Mammary epithelial cell (primary cell): ENCODE measurements at regions of chr21 and their contacts with region 1.

Region 1: DNA sequence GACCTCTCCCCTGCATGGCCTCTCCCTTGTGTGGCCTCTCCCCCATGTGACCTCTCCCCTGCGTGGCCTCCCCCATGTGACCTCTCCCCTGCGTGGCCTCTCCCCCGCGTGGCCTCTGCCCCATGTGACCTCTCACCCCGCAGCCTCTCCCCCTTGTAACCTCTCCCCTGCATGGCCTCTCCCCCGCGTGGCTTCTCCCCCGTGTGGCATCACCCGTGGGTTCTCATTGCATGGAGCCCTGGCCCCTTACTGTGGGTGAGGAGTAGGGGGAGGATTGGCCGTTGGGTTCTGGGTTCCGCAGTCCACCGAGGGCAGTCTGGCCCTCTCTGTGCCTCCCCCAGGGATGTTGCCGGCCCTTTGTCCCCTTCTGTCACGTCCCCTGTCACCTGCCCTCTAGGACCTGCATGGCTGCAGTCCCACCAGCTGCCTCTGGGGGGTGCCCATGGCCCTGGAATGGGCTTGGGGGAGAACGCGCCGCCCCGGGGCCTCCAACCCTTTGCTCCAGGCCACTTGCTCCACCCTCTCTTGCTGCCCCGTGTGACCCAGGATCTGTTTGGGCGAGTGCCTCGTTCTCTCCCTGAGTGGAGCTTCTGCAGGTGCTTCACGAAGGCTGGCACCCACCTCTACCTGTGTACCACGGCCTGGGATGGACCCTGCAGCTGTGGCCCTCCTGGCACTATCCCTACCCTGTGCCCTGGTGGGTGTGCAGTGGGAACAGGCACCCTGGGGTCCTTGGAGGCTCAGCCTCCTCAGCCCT is 21.3 kb downstream of the RRP1 start:
- DNase-seq: peak; percentile 53
- H3K4me3 ChIP-seq: peak overlapping the region in 2 of 3 experiments; percentile 31 to 49
- H3K27ac ChIP-seq: no peak overlapping the region
- H3K4me1 ChIP-seq: peaks cover 50% of the 10 kb centered on the region
- H3K27me3 ChIP-seq: no peaks in the 10 kb centered on the region
- CTCF ChIP-seq: peak; percentile 87 to 97

Region 2: DNA sequence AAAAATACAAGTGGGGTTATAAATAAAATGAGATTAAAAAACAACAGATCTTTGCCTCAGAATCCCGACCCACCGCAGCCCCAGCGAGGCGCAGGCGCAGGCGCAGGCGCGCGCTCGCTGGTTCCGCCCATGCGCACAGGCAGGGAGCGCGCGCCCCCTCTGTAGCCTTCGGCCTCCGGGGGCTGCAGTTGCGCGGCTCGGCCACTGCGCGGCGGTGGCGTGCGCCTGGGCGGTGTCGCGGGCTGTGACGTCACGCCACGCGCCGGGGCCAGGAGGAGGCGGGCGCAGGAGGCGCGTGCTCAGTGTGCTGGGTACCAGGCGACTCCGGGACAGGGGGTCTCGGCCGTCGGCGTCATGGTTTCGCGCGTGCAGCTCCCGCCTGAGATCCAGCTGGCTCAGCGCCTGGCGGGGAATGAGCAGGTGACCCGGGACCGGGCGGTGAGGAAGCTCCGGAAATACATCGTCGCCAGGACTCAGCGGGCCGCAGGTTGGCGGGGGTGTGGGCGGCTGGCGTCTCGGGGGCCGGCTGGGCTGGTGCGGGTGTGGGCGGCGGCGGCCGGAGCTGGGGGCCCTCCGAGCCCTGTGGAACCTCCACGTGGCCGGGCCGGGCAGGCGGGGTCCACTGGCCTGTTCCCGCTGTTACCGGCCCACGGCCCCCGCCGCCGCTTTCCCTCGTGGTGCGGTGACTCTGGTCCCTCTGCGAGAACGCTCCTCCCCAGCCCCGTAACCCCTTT is 21.2 kb before region 1 on chr21 and contains the start of gene RRP1:
- CTCF ChIA-PET with region 1: no interaction called
- dilution Hi-C with region 1: no loop called
- in situ Hi-C with region 1: no loop called
- intact Hi-C with region 1: loop called (anchors 1 kb)
- DNase-seq: peak; percentile 87
- H3K4me3 ChIP-seq: peak within 1 kb of the TSS; percentile 84 to 100 (median 87)
- H3K27ac ChIP-seq: peak within 1 kb of the TSS; percentile 68
- H3K4me1 ChIP-seq: peaks cover 8% of the 10 kb centered on the region
- H3K27me3 ChIP-seq: no peaks in the 10 kb centered on the region
- CTCF ChIP-seq: peak; percentile 78 to 92
- total RNA-seq, gene RRP1: 20.7 to 40.8 TPM

Region 3: GRCh38 chr21:43866260-43866629 is 55.6 kb after region 1 on chr21:
- CTCF ChIA-PET with region 1: no interaction called
- dilution Hi-C with region 1: no loop called
- in situ Hi-C with region 1: no loop called
- intact Hi-C with region 1: loop called (anchors 2 kb)
- DNase-seq: peak; percentile 29
- H3K4me3 ChIP-seq: peak overlapping the region; percentile 55 to 62 (median 58)
- H3K27ac ChIP-seq: no peak overlapping the region
- H3K4me1 ChIP-seq: peaks cover 14% of the 10 kb centered on the region
- H3K27me3 ChIP-seq: no peaks in the 10 kb centered on the region
- CTCF ChIP-seq: no peak

Region 4: GRCh38 chr21:43938751-43939442 is 128.2 kb after region 1 on chr21:
- CTCF ChIA-PET with region 1: interaction called, 4 read pairs
- dilution Hi-C with region 1: loop called (anchors 10 kb)
- in situ Hi-C with region 1: no loop called
- intact Hi-C with region 1: loop called (anchors 1 kb)
- DNase-seq: peak; percentile 46
- H3K4me3 ChIP-seq: peak overlapping the region; percentile 43 to 59 (median 54)
- H3K27ac ChIP-seq: no peak overlapping the region
- H3K4me1 ChIP-seq: peaks cover 4% of the 10 kb centered on the region
- H3K27me3 ChIP-seq: no peaks in the 10 kb centered on the region
- CTCF ChIP-seq: peak; percentile 96 to 100

Region 5: GRCh38 chr21:43975495-43975993 is 164.9 kb after region 1 on chr21:
- CTCF ChIA-PET with region 1: no interaction called
- dilution Hi-C with region 1: no loop called
- in situ Hi-C with region 1: loop called in 1 of 2 experiments (anchors 5 kb)
- intact Hi-C with region 1: loop called (anchors 1 kb)
- DNase-seq: peak; percentile 45
- H3K4me3 ChIP-seq: peak overlapping the region; percentile 19 to 42 (median 37)
- H3K27ac ChIP-seq: no peak overlapping the region
- H3K4me1 ChIP-seq: peaks cover 7% of the 10 kb centered on the region
- H3K27me3 ChIP-seq: no peaks in the 10 kb centered on the region
- CTCF ChIP-seq: peak; percentile 91 to 96

Region 6: GRCh38 chr21:44011980-44012527 is 201.4 kb after region 1 on chr21 and contains the start of gene TRAPPC10:
- CTCF ChIA-PET with region 1: no interaction called
- dilution Hi-C with region 1: loop called (anchors 5 kb)
- in situ Hi-C with region 1: no loop called
- intact Hi-C with region 1: no loop called
- DNase-seq: peak; percentile 85
- H3K4me3 ChIP-seq: peak within 1 kb of the TSS; percentile 61 to 84 (median 65)
- H3K27ac ChIP-seq: peak within 1 kb of the TSS; percentile 67
- H3K4me1 ChIP-seq: peaks cover 13% of the 10 kb centered on the region
- H3K27me3 ChIP-seq: no peaks in the 10 kb centered on the region
- CTCF ChIP-seq: no peak
- total RNA-seq, gene TRAPPC10: 36.3 to 37.3 TPM

Region 7: GRCh38 chr21:44338971-44339910 is 528.6 kb after region 1 on chr21 and contains the start of gene CFAP410:
- CTCF ChIA-PET with region 1: no interaction called
- dilution Hi-C with region 1: no loop called
- in situ Hi-C with region 1: no loop called
- intact Hi-C with region 1: loop called (anchors 10 kb)
- DNase-seq: peak; percentile 91
- H3K4me3 ChIP-seq: peak within 1 kb of the TSS; percentile 71 to 91 (median 72)
- H3K27ac ChIP-seq: peak within 1 kb of the TSS; percentile 78
- H3K4me1 ChIP-seq: peaks cover 13% of the 10 kb centered on the region
- H3K27me3 ChIP-seq: no peaks in the 10 kb centered on the region
- CTCF ChIP-seq: no peak
- total RNA-seq, gene CFAP410: 8.3 to 9.6 TPM